A673 (cell line): ENCODE measurements at regions of chr4 and their contacts with region 1.

Region 1: DNA sequence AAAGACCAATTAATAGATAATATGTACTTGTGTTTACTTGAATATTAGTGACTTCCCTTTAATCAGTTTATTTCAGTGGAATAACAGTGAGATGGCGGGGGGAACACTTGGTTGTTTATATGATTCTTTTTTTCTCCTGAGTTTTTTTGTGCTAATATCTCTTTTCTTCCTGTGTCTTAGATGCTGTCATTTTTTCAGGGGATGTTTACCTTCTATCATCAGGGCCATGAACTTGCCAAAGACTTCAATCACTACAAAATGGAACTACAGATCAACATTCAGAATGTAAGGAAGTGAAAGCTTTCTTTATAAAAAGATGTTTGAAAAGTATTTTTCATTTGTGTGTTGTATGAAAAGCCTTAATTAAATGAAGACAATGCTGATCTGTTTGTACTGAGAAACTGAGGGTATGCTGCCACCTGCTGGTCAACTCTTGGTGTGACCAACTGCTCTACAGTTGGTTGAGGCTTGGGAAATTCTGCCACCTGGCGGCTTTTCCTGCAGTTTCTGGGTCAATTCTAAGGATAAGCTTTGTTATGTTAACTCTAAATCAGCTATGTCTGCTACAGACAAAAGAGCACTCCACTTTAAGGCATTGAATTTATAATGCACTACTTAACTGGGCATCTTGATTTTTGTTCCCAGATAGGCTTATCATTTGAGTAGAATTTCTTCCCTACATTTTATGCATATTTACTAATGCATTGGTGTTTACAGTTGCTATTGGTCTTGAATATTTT is 134.8 kb downstream of the ARHGAP10 start:
- DNase-seq: peak; percentile 91
- H3K4me3 ChIP-seq: no peak overlapping the region
- H3K27ac ChIP-seq: no peak overlapping the region
- H3K4me1 ChIP-seq: peaks cover 2% of the 10 kb centered on the region
- H3K27me3 ChIP-seq: no peaks in the 10 kb centered on the region
- CTCF ChIP-seq: peak; percentile 99

Region 2: DNA sequence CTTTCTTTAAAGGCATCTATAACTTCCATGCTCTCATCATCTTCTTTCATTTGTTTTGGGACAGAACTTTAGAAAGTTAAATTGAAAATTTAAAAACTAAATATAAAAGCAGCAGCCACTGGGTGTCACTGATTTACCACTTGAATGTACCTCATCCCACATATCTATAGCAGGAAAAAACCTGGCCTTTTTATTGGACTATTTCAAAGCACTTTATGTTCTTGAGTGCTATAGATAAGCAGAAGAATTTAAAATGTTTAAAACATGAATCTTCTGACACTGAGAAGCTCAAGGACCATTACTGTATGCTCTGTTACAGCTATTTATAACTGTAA is 755.7 kb before region 1 on chr4:
- CTCF ChIA-PET with region 1: interaction called, 7 read pairs
- POLR2A ChIA-PET with region 1: no interaction called
- intact Hi-C with region 1: loop called (anchors 5 kb)
- DNase-seq: peak; percentile 55
- H3K4me3 ChIP-seq: no peak overlapping the region
- H3K27ac ChIP-seq: no peak overlapping the region
- H3K4me1 ChIP-seq: peaks cover 8% of the 10 kb centered on the region
- H3K27me3 ChIP-seq: no peaks in the 10 kb centered on the region
- CTCF ChIP-seq: peak; percentile 57

Region 3: DNA sequence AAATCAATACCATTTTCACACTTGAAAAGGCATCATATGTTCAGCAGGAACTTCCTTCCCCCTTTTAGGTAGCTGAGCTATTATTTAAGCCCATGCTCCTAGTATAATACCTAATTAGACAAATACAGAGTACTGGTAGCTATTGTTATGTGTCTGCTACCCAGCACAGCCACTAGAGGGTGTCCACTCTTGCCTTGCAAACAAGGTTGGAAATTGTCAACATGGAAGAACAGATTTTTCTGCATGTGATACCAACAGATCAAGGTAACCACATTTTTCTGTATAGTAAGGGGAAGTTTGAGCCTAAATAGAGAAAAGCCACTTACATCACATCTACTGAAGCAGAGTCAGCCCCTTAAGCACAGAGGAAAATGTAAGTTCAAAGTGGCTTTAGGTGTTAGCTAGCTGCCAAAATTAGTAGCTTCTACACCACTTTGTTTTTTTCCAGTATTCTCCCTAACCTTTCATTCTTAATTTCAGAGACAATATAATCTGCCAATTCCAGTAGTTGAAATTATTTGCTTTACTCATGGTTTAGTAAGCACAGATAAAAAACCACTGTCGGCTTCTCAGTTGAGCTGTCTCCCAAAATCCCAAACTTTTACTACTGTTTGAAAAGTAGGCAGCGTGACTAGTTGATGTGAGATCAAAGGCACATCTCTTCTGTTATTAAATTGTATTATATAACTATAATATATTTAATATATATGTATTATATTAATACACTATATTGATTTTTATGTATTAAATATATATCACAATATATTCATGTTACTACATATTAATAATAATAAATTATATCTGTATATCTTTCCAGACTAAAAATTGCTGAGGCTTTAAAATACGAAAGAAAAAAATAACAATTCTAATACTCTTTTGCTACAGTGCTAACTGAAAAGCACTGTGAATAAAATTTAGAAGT is 347.6 kb before region 1 on chr4:
- CTCF ChIA-PET with region 1: interaction called, 8 read pairs
- POLR2A ChIA-PET with region 1: no interaction called
- intact Hi-C with region 1: loop called (anchors 10 kb)
- DNase-seq: peak; percentile 81
- H3K4me3 ChIP-seq: no peak overlapping the region
- H3K27ac ChIP-seq: no peak overlapping the region
- H3K4me1 ChIP-seq: peaks cover 22% of the 10 kb centered on the region
- H3K27me3 ChIP-seq: no peaks in the 10 kb centered on the region
- CTCF ChIP-seq: peak; percentile 96

Region 4: GRCh38 chr4:147596981-147597380 is 269.7 kb before region 1 on chr4:
- CTCF ChIA-PET with region 1: interaction called, 20 read pairs
- POLR2A ChIA-PET with region 1: no interaction called
- intact Hi-C with region 1: loop called (anchors 1 kb)
- DNase-seq: peak; percentile 72
- H3K4me3 ChIP-seq: no peak overlapping the region
- H3K27ac ChIP-seq: peak overlapping the region; percentile 2
- H3K4me1 ChIP-seq: peaks cover 11% of the 10 kb centered on the region
- H3K27me3 ChIP-seq: no peaks in the 10 kb centered on the region
- CTCF ChIP-seq: no peak

Region 5: DNA sequence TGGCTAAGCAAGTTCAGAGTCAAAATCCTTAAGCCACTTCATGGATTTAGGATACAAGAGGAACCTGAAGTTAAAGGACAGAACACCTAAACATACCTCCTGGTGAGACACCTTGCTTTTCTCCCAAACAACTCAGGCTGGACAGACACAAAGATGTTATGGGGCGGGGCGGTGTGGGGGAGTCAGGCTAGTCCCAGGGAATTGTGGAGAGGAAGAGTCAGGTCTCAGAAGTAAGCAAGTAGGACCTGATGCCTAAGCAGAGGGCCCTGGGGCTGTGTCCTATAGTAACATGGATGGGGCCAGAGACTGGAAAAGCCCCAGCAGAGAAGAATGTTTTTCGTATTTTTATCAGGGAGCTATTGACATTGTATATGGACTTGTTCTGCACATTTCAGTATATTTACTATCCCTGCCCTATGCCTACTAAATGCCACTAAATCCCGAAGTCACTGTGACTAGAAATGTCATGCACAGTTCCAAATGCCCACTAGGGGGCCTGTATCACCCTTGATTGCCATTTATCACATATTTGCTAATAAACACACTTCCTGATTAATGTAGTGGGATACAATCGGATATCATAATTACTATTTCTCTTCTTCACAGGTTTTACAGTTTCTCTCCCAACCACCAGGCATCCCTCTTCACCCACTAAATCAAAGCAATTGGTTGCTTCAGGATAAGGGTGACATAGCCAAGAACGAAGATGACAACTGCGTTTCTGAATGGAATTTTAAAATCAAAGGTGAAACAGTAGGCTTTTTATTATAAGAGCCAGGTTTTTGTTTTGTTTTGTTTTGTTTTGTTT is 158.6 kb before region 1 on chr4:
- CTCF ChIA-PET with region 1: interaction called, 6 read pairs
- POLR2A ChIA-PET with region 1: no interaction called
- intact Hi-C with region 1: loop called (anchors 1 kb)
- DNase-seq: peak; percentile 64
- H3K4me3 ChIP-seq: no peak overlapping the region
- H3K27ac ChIP-seq: no peak overlapping the region
- H3K4me1 ChIP-seq: no peaks in the 10 kb centered on the region
- H3K27me3 ChIP-seq: no peaks in the 10 kb centered on the region
- CTCF ChIP-seq: peak; percentile 91